ENCODE measurements at regions of chr20 and their contacts with region 1.

Region 1: GRCh38 chr20:25247956-25248785 is at the start of gene PYGB:
- DNase-seq: peak; percentile 87
- ATAC-seq: peak; percentile 88
- H3K4me3 Mint-ChIP-seq: peak within 1 kb of the TSS; percentile 88
- H3K27ac Mint-ChIP-seq: peak within 1 kb of the TSS; percentile 88
- H3K4me1 Mint-ChIP-seq: peaks cover 56% of the 10 kb centered on the region
- H3K27me3 Mint-ChIP-seq: peaks cover 3% of the 10 kb centered on the region
- total RNA-seq, gene PYGB: 18.0 to 21.1 TPM

Region 2: DNA sequence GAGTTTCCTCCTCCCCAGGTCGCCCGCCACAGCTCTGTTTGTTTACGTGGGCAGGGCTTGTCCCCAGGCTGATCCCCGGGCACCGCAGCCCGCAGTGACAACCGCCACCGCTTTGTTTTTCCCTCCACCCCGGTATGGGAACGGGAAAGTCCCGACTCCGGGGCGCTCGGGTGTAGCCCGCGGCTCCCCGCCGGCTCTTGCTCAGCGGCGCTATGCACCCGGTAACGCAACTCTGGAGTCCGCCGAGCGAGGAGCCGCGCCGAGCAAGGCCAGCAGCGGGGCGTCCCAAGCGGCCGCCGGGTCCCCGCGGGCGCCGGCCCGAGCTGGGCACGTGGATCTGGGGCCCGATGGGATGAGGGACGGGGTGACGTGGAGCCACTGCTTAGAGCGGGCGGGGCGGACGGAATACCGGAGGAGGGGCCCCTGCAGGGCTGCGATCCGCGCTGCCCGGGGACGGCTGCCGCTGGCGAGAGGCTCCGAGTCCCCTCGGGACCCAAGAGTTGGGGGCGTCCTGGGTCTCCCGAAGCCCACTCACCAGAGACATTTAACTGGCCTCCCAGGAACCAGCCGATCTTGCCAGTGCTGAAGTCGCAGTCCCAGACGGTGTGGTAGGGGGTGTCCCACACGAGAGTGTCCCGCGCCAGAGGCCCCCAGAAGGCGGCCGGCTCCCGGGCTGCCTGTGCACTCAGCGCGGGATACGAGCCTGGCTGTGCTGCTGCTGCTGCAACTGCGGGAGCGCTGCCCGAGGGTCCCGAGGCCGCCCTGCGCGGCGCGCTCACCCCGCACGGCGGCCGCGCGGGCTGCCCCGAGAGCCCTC is 190.7 kb before region 1 on chr20:
- CTCF ChIA-PET with region 1: no interaction called
- POLR2A ChIA-PET with region 1: no interaction called
- intact Hi-C with region 1: loop called in 1 of 2 experiments (anchors 1 kb)
- DNase-seq: peak; percentile 86
- ATAC-seq: peak; percentile 52
- H3K4me3 Mint-ChIP-seq: peak overlapping the region; percentile 74
- H3K27ac Mint-ChIP-seq: peak overlapping the region; percentile 77
- H3K4me1 Mint-ChIP-seq: peaks cover 53% of the 10 kb centered on the region
- H3K27me3 Mint-ChIP-seq: no peaks in the 10 kb centered on the region

Region 3: DNA sequence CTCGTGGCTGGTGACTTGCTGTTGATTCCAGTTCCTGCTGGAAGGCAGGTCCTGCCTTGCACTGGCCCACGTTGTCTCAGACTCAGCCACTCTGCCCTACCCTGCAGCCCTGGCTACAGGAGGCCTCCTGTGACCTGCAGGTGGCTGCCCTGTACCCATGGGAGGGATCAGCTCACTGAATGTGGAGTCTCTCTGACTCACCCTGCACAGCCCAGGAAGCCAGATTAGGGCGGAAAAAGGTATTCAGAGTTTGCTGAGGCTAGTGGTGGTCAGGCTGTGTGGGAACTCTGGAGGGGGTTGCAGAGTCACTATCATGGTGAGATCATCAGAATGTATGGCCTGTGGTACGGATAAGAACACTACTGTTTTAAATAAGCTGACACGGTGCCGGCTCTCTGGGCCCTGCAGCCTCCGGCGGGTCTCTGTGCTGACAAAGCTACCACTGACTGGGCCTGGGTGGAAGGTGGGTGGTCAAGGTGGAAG is 25.0 kb before region 1 on chr20:
- CTCF ChIA-PET with region 1: interaction called, 3 read pairs
- POLR2A ChIA-PET with region 1: interaction called, 3 read pairs
- intact Hi-C with region 1: loop called in 1 of 2 experiments (anchors 1 kb)
- DNase-seq: peak; percentile 76
- ATAC-seq: peak; percentile 97
- H3K4me3 Mint-ChIP-seq: no peak overlapping the region
- H3K27ac Mint-ChIP-seq: peak overlapping the region; percentile 42
- H3K4me1 Mint-ChIP-seq: peaks cover 7% of the 10 kb centered on the region
- H3K27me3 Mint-ChIP-seq: no peaks in the 10 kb centered on the region

Region 4: GRCh38 chr20:25281541-25281991 is 33.4 kb after region 1 on chr20:
- CTCF ChIA-PET with region 1: no interaction called
- POLR2A ChIA-PET with region 1: no interaction called
- intact Hi-C with region 1: no loop called
- DNase-seq: peak; percentile 9
- ATAC-seq: no peak
- H3K4me3 Mint-ChIP-seq: no peak overlapping the region
- H3K27ac Mint-ChIP-seq: no peak overlapping the region
- H3K4me1 Mint-ChIP-seq: no peaks in the 10 kb centered on the region
- H3K27me3 Mint-ChIP-seq: no peaks in the 10 kb centered on the region

Region 5: GRCh38 chr20:25310268-25310920 is 62.2 kb after region 1 on chr20:
- CTCF ChIA-PET with region 1: no interaction called
- POLR2A ChIA-PET with region 1: no interaction called
- intact Hi-C with region 1: loop called in 1 of 2 experiments (anchors 2 kb)
- DNase-seq: peak; percentile 79
- ATAC-seq: peak; percentile 97
- H3K4me3 Mint-ChIP-seq: peak overlapping the region; percentile 59
- H3K27ac Mint-ChIP-seq: peak overlapping the region; percentile 94
- H3K4me1 Mint-ChIP-seq: peaks cover 35% of the 10 kb centered on the region
- H3K27me3 Mint-ChIP-seq: no peaks in the 10 kb centered on the region

Region 6: DNA sequence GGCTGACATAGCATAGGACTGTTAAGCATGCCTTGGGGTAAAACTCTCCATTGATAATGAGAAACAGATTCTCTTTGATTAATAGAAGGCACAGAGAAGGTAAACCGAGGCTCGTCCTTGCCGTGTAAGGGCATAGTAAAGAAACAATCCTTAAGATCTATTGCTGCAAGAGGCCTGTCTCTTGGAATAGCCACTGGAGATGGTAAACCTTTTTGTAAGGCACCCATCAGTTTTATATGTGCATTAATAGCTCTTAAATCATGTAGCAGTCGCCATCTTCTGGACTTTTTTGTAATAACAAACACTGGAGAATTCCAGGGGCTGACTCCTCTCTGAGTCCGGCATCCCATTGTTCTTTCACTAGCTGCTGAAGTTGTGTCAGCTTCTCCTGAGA is 150.9 kb after region 1 on chr20:
- CTCF ChIA-PET with region 1: no interaction called
- POLR2A ChIA-PET with region 1: no interaction called
- intact Hi-C with region 1: loop called (anchors 2 to 5 kb)
- DNase-seq: peak; percentile 15
- ATAC-seq: peak; percentile 63
- H3K4me3 Mint-ChIP-seq: no peak overlapping the region
- H3K27ac Mint-ChIP-seq: no peak overlapping the region
- H3K4me1 Mint-ChIP-seq: no peaks in the 10 kb centered on the region
- H3K27me3 Mint-ChIP-seq: no peaks in the 10 kb centered on the region

Region 7: DNA sequence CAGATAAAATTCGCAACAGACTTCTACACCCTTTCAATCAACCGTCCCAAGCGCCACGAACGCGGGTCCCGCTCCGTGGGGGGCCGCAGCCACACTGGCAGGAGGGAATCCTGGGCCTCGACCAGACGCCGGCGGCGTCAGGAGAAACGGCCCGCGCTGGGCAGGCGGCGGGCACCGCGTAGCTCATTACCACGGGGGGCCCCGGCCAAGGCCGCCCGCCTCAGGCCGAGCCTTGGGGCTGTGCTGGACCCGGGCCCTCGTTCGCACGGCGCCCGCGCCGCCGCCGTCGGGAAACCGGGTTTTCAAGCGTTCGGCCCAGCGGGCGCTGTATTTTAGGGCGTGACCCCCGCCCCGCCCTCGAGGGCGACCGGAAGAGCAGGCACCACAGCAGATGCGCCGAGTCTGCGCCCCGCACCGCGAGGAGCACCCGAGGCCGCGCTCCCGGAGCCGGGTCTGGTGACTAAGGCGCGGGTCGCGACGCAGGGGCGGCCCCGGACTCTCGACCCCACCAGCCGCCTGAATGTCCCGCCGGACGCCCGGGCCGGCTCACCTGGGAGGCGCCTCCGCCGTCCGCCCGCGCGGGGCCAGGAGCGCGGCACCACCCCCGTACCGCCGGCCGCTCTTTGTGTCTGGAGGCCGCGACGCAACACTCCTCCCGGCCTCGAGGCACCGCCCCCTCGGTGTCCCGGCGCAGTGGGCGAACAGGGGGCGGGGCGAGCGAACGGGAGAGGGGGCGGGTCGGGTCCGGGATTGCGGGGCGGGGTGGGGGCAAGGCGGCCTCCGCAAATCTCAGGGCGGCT is 336.9 kb after region 1 on chr20 and contains the start of gene NINL:
- CTCF ChIA-PET with region 1: no interaction called
- POLR2A ChIA-PET with region 1: no interaction called
- intact Hi-C with region 1: loop called in 1 of 2 experiments (anchors 10 kb)
- DNase-seq: peak; percentile 69
- ATAC-seq: peak; percentile 82
- H3K4me3 Mint-ChIP-seq: peak within 1 kb of the TSS; percentile 73
- H3K27ac Mint-ChIP-seq: peak within 1 kb of the TSS; percentile 81
- H3K4me1 Mint-ChIP-seq: peaks cover 15% of the 10 kb centered on the region
- H3K27me3 Mint-ChIP-seq: peaks cover 9% of the 10 kb centered on the region
- total RNA-seq, gene NINL: 3.3 to 4.1 TPM

Region 8: DNA sequence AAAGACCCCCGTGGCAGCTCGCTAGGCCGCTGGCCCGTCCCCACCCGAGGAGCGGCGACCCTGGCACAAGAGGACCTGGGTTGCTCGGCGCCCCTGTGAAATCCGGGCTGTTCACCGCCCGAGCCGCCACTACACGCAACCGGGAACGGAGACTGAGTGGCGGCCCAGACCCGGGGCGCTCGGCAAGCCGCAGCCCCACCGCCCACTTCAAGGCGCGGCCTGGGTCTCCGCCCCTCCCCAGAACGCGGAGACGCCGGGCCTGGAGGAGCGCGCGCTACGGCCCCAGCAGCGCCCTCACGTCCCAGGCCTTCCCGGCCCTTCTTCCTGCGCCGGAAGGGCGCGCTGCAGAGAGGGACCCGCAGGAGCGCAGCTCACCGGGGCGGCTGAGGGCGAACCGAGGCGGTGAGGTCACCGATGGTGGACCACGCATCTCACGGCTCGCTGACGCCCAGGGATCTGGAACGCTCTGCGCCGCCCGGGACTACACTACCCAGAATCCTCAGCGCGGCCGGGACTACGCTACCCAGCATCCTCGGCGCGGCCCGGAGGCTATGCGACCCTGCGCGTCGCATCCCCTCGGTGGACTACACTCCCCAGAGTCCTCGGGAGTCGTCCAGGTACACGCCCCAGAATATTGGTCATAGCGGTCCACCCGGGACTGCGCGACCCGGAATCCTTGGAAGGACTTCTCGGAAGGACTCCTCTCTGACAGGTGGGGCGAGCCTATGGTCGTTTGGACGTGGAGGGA is 448.4 kb after region 1 on chr20 and contains the start of gene ZNF337:
- CTCF ChIA-PET with region 1: no interaction called
- POLR2A ChIA-PET with region 1: no interaction called
- intact Hi-C with region 1: loop called in 1 of 2 experiments (anchors 2 kb)
- DNase-seq: peak; percentile 97
- ATAC-seq: peak; percentile 97
- H3K4me3 Mint-ChIP-seq: peak within 1 kb of the TSS; percentile 83
- H3K27ac Mint-ChIP-seq: peak within 1 kb of the TSS; percentile 84
- H3K4me1 Mint-ChIP-seq: peaks cover 41% of the 10 kb centered on the region
- H3K27me3 Mint-ChIP-seq: no peaks in the 10 kb centered on the region
- total RNA-seq, gene ZNF337: 12.6 TPM

Measured in activated CD4-positive, alpha-beta T cell treated with anti-CD3 and anti-CD28 coated beads for 36 hours (primary cell).